ENCODE measurements at regions of chr7 and their contacts with region 1.

Region 1: GRCh38 chr7:27423272-27423671 is 180.7 kb downstream of the EVX1 start:
- DNase-seq: no peak

Region 2: DNA sequence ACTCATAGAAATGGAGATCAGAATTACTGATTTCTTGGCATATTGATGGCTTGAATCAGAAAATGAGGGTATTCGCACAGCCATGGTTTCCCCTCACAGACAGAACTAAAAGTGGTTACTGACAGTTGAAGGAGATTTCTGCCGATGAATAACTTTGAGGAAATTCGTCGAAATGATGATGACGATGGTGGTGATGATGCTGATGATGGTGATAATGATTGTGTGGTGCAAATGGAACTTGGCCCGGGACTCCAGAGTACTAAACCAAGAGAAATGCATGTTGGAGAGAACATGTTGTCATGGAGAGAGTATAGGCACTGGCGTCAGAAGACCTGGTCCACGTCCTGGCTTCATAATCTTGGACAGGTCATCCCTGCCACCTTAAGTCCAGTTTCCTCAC is 17.5 kb before region 1 on chr7:
- intact Hi-C with region 1: loop called in 1 of 2 experiments (anchors 1 kb)
- DNase-seq: no peak

Region 3: DNA sequence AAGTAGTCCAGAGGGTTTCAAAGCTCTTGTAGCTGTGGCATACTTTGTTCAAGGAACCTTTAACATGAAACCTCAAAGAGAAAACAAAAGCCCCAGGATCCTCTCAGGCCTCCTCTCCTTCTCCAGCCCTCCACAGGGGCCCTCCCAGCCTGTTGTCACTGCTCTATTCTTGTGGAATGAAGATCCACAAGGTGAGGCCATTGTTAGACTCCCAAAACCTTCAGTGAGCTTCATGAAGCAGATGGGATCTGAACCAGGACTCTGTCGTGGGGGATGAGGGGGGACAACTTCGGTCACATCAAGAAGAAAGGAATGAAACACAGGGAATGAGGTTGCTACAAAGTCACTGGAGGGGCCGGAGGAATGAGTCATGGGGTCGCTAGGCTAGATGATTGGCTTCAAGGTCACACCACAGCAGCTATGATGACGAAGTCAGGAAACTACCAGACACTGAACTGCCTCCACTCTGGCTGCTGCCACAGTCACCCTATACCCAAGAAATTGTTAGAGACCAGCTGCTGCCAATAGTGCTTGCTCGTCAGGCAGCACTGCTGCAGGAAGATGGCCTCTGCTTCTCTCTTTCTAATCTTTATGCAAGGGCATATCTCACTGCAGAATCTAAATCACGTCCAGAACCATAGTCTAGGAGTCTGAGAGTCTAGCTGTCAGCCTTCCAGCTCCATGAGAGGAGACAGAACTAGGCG is 30.6 kb after region 1 on chr7:
- intact Hi-C with region 1: loop called in 1 of 2 experiments (anchors 2 kb)
- DNase-seq: no peak

Region 4: DNA sequence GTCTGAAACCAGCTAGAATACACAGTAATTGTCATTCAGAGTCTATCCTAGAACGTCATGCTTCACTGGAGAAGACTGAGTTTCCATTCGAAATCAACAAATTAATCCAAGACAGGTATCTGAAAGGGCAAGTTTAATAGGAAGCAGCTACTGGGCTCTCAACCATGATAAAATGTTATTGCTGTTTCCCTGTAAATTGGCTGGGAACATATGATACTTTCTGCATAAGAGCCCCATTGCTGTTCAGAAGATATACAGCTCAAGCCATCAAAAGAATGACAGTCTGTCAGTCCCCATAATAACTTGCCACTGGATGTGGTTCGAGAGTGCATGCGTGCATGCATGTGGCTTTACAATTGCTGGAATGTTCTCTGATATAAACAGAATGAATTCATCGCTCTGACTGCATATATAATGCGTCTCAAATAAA is 110.4 kb after region 1 on chr7:
- intact Hi-C with region 1: no loop called
- DNase-seq: no peak